ENCODE measurements at regions of chr6 and their contacts with region 1.

Region 1: GRCh38 chr6:149513915-149514314 is 29.1 kb upstream of the ZC3H12D start:
- DNase-seq: no peak
- H3K4me3 Mint-ChIP-seq: no peak overlapping the region
- H3K27ac Mint-ChIP-seq: peak overlapping the region; percentile 4
- H3K4me1 Mint-ChIP-seq: peaks cover 50% of the 10 kb centered on the region
- H3K27me3 Mint-ChIP-seq: no peaks in the 10 kb centered on the region

Region 2: GRCh38 chr6:148559848-148560433 is 954.0 kb before region 1 on chr6:
- CTCF ChIA-PET with region 1: no interaction called
- intact Hi-C with region 1: loop called (anchors 5 kb)
- DNase-seq: peak; percentile 64
- H3K4me3 Mint-ChIP-seq: no peak overlapping the region
- H3K27ac Mint-ChIP-seq: no peak overlapping the region
- H3K4me1 Mint-ChIP-seq: peaks cover 4% of the 10 kb centered on the region
- H3K27me3 Mint-ChIP-seq: peaks cover 18% of the 10 kb centered on the region

Region 3: GRCh38 chr6:149235130-149235561 is 278.8 kb before region 1 on chr6:
- CTCF ChIA-PET with region 1: interaction called, 3 read pairs
- intact Hi-C with region 1: loop called (anchors 2 kb)
- DNase-seq: no peak
- H3K4me3 Mint-ChIP-seq: no peak overlapping the region
- H3K27ac Mint-ChIP-seq: peak overlapping the region; percentile 95
- H3K4me1 Mint-ChIP-seq: peaks cover 49% of the 10 kb centered on the region
- H3K27me3 Mint-ChIP-seq: no peaks in the 10 kb centered on the region

Region 4: GRCh38 chr6:149443411-149444181 is 70.3 kb before region 1 on chr6:
- CTCF ChIA-PET with region 1: interaction called, 21 read pairs
- intact Hi-C with region 1: no loop called
- DNase-seq: no peak
- H3K4me3 Mint-ChIP-seq: no peak overlapping the region
- H3K27ac Mint-ChIP-seq: no peak overlapping the region
- H3K4me1 Mint-ChIP-seq: peaks cover 9% of the 10 kb centered on the region
- H3K27me3 Mint-ChIP-seq: no peaks in the 10 kb centered on the region

Region 5: GRCh38 chr6:149463781-149464180 is 50.1 kb before region 1 on chr6:
- CTCF ChIA-PET with region 1: interaction called, 10 read pairs
- intact Hi-C with region 1: no loop called
- DNase-seq: no peak
- H3K4me3 Mint-ChIP-seq: no peak overlapping the region
- H3K27ac Mint-ChIP-seq: peak overlapping the region; percentile 32
- H3K4me1 Mint-ChIP-seq: peaks cover 44% of the 10 kb centered on the region
- H3K27me3 Mint-ChIP-seq: no peaks in the 10 kb centered on the region

Region 6: DNA sequence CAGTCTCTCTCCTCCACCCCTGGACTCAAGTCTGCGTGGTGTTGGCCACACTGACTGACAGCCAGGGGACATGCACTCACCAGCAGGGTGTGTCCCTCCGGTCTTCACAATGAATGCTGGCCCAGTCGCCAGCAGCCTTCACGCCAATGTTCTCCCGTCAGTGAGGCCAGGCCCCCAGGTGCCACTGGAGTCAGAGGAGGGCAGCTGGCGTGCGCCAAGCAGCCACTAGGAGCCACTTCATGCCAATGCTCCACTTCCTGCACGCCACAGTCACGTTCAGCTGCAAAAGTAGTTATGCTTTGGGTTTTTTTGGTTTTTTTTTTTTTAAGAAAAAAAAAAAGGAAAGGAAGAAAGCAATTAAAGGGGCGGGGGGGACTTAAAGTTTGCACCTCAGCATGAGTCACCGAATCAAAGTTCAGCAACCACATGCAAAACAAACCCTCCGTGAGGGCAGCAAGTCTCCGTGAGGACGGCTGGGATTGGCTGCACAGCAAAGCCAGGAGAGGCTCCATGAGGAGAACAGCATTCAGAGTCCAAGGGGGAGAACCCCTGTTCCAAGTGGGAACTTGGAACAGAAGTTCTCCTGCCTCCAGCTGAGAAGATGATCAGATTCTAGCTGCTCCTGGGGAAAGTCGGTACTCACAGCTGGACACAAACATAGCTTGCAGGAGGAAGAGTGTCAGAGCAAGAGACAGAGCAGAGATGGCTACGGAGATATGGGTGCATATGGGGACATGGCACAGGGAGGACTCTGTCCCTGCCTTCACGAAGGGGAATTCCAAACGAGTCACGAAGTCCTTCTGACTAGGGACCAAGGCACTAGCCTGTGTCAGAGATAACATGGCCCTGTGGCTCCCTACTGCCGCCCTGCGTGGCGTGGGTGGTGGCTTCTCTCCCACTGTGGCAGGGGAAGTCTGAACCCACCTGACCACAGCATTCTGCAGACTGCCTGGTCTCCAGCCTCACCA is 28.9 kb before region 1 on chr6 and contains the start of gene ZC3H12D:
- CTCF ChIA-PET with region 1: interaction called, 24 read pairs
- intact Hi-C with region 1: loop called (anchors 1 kb)
- DNase-seq: peak; percentile 92
- H3K4me3 Mint-ChIP-seq: peak within 1 kb of the TSS; percentile 94
- H3K27ac Mint-ChIP-seq: peak within 1 kb of the TSS; percentile 97
- H3K4me1 Mint-ChIP-seq: peaks cover 59% of the 10 kb centered on the region
- H3K27me3 Mint-ChIP-seq: no peaks in the 10 kb centered on the region
- total RNA-seq, gene ZC3H12D: 75.8 to 82.7 TPM

Region 7: GRCh38 chr6:149499066-149499465 is 14.8 kb before region 1 on chr6:
- CTCF ChIA-PET with region 1: interaction called, 31 read pairs
- intact Hi-C with region 1: loop called (anchors 1 kb)
- DNase-seq: no peak
- H3K4me3 Mint-ChIP-seq: no peak overlapping the region
- H3K27ac Mint-ChIP-seq: peak overlapping the region; percentile 87
- H3K4me1 Mint-ChIP-seq: peaks cover 81% of the 10 kb centered on the region
- H3K27me3 Mint-ChIP-seq: no peaks in the 10 kb centered on the region

Measured in activated naive CD4-positive, alpha-beta T cell treated with anti-CD3 and anti-CD28 coated beads for 36 hours (primary cell).